Activated CD4-positive, alpha-beta T cell treated with anti-CD3 and anti-CD28 coated beads for 36 hours (primary cell): ENCODE measurements at regions of chr22 and their contacts with region 1.

Region 1: DNA sequence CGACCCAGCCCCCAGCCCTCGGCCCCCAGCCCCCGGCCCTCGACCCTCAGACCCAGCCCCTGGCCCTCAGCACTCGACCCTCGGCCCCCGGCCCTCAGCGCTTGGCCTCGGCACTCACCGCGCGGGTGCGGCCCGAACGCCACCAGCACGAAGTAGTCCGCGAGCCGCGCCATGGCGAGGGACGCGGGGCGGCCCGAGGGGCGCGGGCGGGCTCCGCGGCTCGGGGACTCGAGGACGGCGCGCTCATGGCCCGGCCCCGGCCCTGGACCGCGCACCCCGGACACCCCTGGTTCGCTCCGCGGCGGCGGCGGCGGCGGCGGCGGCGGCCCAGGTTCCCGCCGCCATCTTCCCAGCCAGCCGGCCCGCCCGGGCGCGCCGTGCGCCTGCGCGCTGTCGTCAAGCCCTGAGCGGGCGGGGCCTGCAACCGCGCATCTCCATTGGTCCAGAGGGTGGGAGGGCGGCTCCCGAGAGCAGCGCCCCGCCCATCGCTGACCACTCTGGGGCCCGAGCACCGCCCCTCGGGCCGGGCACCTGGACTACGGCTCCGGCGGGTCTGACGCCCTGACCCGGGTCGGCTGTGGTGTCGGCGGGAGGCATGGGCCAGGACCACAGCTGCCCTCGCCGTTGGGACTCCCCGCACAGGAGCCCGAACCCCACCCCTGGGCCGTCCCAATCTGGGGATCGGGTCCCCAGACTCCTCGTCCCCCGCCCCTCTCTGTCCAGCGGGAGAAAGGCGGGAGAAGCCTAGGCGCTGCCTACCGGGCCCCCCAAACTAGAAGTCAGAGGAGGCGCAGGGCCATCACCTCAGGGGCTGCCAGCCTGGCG is at the start of gene SBF1:
- DNase-seq: peak; percentile 95
- ATAC-seq: peak; percentile 78
- H3K4me3 Mint-ChIP-seq: peak within 1 kb of the TSS; percentile 89
- H3K27ac Mint-ChIP-seq: peak within 1 kb of the TSS; percentile 83
- H3K4me1 Mint-ChIP-seq: peaks cover 42% of the 10 kb centered on the region
- H3K27me3 Mint-ChIP-seq: peaks cover 2% of the 10 kb centered on the region
- total RNA-seq, gene SBF1: 97.6 TPM

Region 2: GRCh38 chr22:50196256-50196655 is 278.6 kb before region 1 on chr22:
- CTCF ChIA-PET with region 1: no interaction called
- POLR2A ChIA-PET with region 1: no interaction called
- intact Hi-C with region 1: no loop called
- DNase-seq: no peak
- ATAC-seq: no peak
- H3K4me3 Mint-ChIP-seq: no peak overlapping the region
- H3K27ac Mint-ChIP-seq: no peak overlapping the region
- H3K4me1 Mint-ChIP-seq: peaks cover 22% of the 10 kb centered on the region
- H3K27me3 Mint-ChIP-seq: no peaks in the 10 kb centered on the region

Region 3: GRCh38 chr22:50276143-50276542 is 198.7 kb before region 1 on chr22:
- CTCF ChIA-PET with region 1: no interaction called
- POLR2A ChIA-PET with region 1: no interaction called
- intact Hi-C with region 1: loop called in 1 of 2 experiments (anchors 2 kb)
- DNase-seq: peak; percentile 81
- ATAC-seq: peak; percentile 70
- H3K4me3 Mint-ChIP-seq: no peak overlapping the region
- H3K27ac Mint-ChIP-seq: no peak overlapping the region
- H3K4me1 Mint-ChIP-seq: peaks cover 1% of the 10 kb centered on the region
- H3K27me3 Mint-ChIP-seq: peaks cover 2% of the 10 kb centered on the region

Region 4: DNA sequence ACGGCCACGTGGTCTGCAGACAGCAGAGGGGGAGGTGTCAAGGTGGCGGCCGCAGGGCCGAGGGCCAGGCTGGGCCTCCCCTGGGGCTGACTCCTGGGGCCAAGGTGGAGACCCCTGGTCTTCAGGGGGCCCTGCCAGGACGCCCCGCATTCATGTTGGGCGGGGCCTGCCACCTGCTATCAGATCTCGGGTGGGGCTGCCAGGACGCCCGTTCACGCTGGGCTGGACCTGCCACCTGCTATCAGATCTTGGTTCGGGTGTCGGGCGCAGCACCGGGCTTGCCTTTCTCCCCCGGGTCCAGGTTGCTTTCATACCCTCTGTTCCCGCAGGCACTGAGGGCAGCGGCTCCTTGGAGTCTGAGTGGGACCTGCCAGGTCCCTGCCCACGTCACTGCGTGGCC is 188.6 kb before region 1 on chr22:
- CTCF ChIA-PET with region 1: no interaction called
- POLR2A ChIA-PET with region 1: no interaction called
- intact Hi-C with region 1: no loop called
- DNase-seq: no peak
- ATAC-seq: no peak
- H3K4me3 Mint-ChIP-seq: no peak overlapping the region
- H3K27ac Mint-ChIP-seq: no peak overlapping the region
- H3K4me1 Mint-ChIP-seq: no peaks in the 10 kb centered on the region
- H3K27me3 Mint-ChIP-seq: peaks cover 3% of the 10 kb centered on the region